Posterior cingulate gyrus (tissue), 11 donors: ENCODE measurements at regions of chr5 and their contacts with region 1.

Region 1: GRCh38 chr5:17216176-17216973 is 1.1 kb upstream of the BASP1 start:
- DNase-seq: peak; percentile 67 to 96 (median 81)

Region 2: DNA sequence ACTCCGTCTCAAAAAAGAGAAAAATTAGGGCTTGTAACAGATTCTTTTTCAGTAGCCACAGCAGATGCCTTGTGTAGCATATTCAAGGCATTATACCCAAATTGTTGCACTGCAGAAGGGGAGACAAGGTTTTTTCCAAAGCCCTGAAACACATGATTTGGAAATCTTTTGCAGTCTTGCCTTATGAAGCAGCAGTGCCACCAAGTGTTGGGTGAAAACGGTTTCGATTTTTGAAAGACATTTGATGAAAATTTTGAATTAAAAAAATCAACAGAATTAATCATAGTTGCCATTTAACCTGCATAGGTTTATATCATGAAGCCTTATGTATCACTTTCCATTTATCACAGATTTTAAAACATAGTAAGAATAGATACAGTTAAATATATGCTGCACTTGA is 897.3 kb after region 1 on chr5:
- intact Hi-C with region 1: loop called (anchors 2 kb)
- DNase-seq: peak in 2 of 10 donors; percentile 9 to 17

Region 3: GRCh38 chr5:18281682-18282557 is 1065.5 kb after region 1 on chr5:
- intact Hi-C with region 1: loop called (anchors 1 kb)
- DNase-seq: no peak

Region 4: DNA sequence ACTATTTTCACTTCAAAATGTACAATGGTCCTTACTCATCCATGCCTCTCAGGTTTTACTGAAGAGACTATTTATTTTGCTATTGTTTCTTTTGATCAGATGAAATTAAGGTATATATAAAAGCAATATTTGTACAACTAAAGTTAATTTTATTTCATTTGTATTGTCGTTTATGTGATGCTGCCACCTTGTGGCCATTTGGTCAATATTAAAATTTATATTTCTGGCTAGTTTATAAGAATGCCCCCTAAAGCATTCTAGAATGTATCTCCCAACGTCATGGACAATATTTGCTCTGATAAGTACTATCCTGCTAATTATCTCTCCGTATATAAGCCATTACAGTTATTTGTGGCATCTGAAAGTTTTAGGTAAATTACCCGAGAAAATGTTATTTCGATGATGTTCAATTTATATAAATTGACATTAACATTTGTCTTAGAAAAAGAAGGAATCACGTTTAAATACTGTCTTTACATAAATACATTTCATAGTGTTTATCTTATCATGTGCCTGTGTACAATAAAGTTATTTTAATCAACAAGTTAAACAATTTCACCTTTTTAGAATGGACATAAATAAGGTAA is 1097.9 kb after region 1 on chr5:
- intact Hi-C with region 1: loop called (anchors 1 kb)
- DNase-seq: no peak